A673 (cell line): ENCODE measurements at regions of chr7 and their contacts with region 1.

Region 1: GRCh38 chr7:38335492-38336147 is 62.2 kb upstream of the TARP start:
- DNase-seq: peak; percentile 91
- H3K4me3 ChIP-seq: no peak overlapping the region
- H3K27ac ChIP-seq: no peak overlapping the region
- H3K4me1 ChIP-seq: peaks cover 8% of the 10 kb centered on the region
- H3K27me3 ChIP-seq: no peaks in the 10 kb centered on the region
- CTCF ChIP-seq: peak; percentile 98

Region 2: DNA sequence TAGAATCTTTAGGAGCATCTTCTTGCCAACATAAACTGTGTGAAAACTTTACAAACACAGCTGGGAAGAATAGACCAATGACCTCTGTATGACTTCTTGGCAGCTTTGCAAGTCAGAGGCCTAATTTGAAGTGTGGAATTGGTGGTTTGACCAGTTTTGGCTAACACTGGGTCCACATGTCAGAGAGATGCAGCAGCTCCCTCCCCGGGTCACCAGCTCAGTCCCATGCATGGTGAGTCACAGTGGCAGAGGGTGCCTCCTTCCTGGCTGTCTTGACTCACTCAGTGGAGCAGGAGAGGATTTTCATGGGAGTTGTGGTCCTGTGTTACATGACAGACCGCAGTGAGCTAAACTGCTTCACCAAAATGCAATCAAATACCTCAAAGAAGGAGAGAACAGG is 165.8 kb before region 1 on chr7:
- CTCF ChIA-PET with region 1: no interaction called
- POLR2A ChIA-PET with region 1: no interaction called
- intact Hi-C with region 1: no loop called
- DNase-seq: no peak
- H3K4me3 ChIP-seq: no peak overlapping the region
- H3K27ac ChIP-seq: no peak overlapping the region
- H3K4me1 ChIP-seq: no peaks in the 10 kb centered on the region
- H3K27me3 ChIP-seq: peaks cover 66% of the 10 kb centered on the region
- CTCF ChIP-seq: no peak

Region 3: DNA sequence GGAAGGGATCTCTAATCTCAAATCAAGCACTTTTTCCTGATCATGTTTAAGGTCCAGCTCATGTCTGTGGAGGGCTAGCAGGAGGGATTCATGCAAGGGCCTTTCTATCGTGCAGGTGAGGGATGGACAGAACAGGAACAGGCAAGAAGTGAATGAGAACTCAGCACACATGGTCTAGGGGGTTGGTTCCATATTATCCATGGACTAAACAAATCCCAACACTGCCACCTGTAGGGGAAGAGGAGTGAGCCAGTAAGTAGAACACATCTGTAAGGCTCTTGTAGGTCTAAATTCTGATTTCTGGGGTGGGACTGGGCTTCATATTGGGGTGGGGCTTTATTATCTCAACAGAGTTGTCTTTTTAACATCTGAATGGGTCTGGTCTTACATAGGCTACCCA is 75.8 kb after region 1 on chr7:
- CTCF ChIA-PET with region 1: no interaction called
- POLR2A ChIA-PET with region 1: no interaction called
- intact Hi-C with region 1: no loop called
- DNase-seq: peak; percentile 51
- H3K4me3 ChIP-seq: no peak overlapping the region
- H3K27ac ChIP-seq: no peak overlapping the region
- H3K4me1 ChIP-seq: no peaks in the 10 kb centered on the region
- H3K27me3 ChIP-seq: peaks cover 9% of the 10 kb centered on the region
- CTCF ChIP-seq: peak; percentile 54

Region 4: GRCh38 chr7:39113360-39113759 is 777.7 kb after region 1 on chr7:
- CTCF ChIA-PET with region 1: interaction called, 10 read pairs
- POLR2A ChIA-PET with region 1: no interaction called
- intact Hi-C with region 1: no loop called
- DNase-seq: no peak
- H3K4me3 ChIP-seq: no peak overlapping the region
- H3K27ac ChIP-seq: no peak overlapping the region
- H3K4me1 ChIP-seq: peaks cover 3% of the 10 kb centered on the region
- H3K27me3 ChIP-seq: no peaks in the 10 kb centered on the region
- CTCF ChIP-seq: no peak